Psoas muscle (tissue), 8 donors: ENCODE measurements at regions of chr20 and their contacts with region 1.

Region 1: GRCh38 chr20:35085477-35086225 is 7.0 kb downstream of the TRPC4AP start:
- DNase-seq: no peak
- ATAC-seq: no peak
- H3K4me3 ChIP-seq: no peak overlapping the region
- H3K27ac ChIP-seq: no peak overlapping the region
- H3K4me1 ChIP-seq: peaks cover 54% of the 10 kb centered on the region
- H3K27me3 ChIP-seq: no peaks in the 10 kb centered on the region
- CTCF ChIP-seq: no peak

Region 2: GRCh38 chr20:35021063-35021462 is 64.6 kb before region 1 on chr20:
- intact Hi-C with region 1: loop called (anchors 10 kb)
- DNase-seq: peak in 1 of 2 donors; percentile 86
- ATAC-seq: peak; percentile 79 to 81 (median 80)
- H3K4me3 ChIP-seq: no peak overlapping the region
- H3K27ac ChIP-seq: peak overlapping the region; percentile 85
- H3K4me1 ChIP-seq: peaks cover 69% of the 10 kb centered on the region
- H3K27me3 ChIP-seq: no peaks in the 10 kb centered on the region
- CTCF ChIP-seq: no peak